Aorta (tissue), 5 donors: ENCODE measurements at regions of chr12 and their contacts with region 1.

Region 1: GRCh38 chr12:116599285-116600136 is 40.3 kb downstream of the MAP1LC3B2 start:
- DNase-seq: peak; percentile 87 to 96
- ATAC-seq: peak; percentile 90
- H3K4me3 ChIP-seq: peak overlapping the region in 1 of 2 donors; percentile 3
- H3K27ac ChIP-seq: peak overlapping the region in 1 of 2 donors; percentile 15
- H3K4me1 ChIP-seq: peaks cover 0 to 2% of the 10 kb centered on the region in 2 donors
- H3K27me3 ChIP-seq: no peaks in the 10 kb centered on the region

Region 2: DNA sequence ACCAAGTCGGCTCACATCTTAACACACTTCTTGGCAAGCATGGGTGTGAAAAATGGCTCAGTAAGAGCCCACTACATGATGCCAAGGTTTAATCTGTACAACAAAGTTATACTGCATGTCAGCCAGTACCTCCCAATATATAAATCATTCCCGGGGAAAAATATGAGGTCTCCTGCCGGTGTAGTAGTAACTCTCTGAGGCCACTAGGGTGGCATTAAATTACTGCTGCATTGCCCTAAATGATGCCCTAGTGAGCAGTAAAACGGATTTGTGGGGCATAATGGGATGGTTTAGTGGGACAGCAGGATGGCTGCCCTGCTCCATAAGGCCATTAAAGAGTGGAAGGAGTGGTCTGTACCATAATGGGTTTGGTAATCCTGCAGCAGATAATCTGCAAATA is 589.7 kb before region 1 on chr12:
- intact Hi-C with region 1: loop called (anchors 5 kb)
- DNase-seq: no peak
- ATAC-seq: no peak
- H3K4me3 ChIP-seq: no peak overlapping the region
- H3K27ac ChIP-seq: no peak overlapping the region
- H3K4me1 ChIP-seq: no peaks in the 10 kb centered on the region
- H3K27me3 ChIP-seq: no peaks in the 10 kb centered on the region

Region 3: GRCh38 chr12:116142936-116143898 is 456.3 kb before region 1 on chr12:
- intact Hi-C with region 1: loop called in 1 of 2 experiments (anchors 10 kb)
- DNase-seq: no peak
- ATAC-seq: no peak
- H3K4me3 ChIP-seq: no peak overlapping the region
- H3K27ac ChIP-seq: peak overlapping the region; percentile 44 to 67
- H3K4me1 ChIP-seq: peaks cover 2 to 6% of the 10 kb centered on the region in 2 donors
- H3K27me3 ChIP-seq: no peaks in the 10 kb centered on the region

Region 4: GRCh38 chr12:116426391-116427136 is 172.9 kb before region 1 on chr12:
- intact Hi-C with region 1: loop called in 1 of 2 experiments (anchors 5 kb)
- DNase-seq: peak; percentile 86 to 91
- ATAC-seq: peak; percentile 91
- H3K4me3 ChIP-seq: no peak overlapping the region
- H3K27ac ChIP-seq: peak overlapping the region in 1 of 2 donors; percentile 56
- H3K4me1 ChIP-seq: no peaks in the 10 kb centered on the region
- H3K27me3 ChIP-seq: no peaks in the 10 kb centered on the region

Region 5: GRCh38 chr12:116533343-116534251 is 65.9 kb before region 1 on chr12:
- intact Hi-C with region 1: loop called (anchors 5 kb)
- DNase-seq: peak; percentile 84 to 93
- ATAC-seq: peak; percentile 85
- H3K4me3 ChIP-seq: peak overlapping the region; percentile 38 to 90
- H3K27ac ChIP-seq: peak overlapping the region in 1 of 2 donors; percentile 37
- H3K4me1 ChIP-seq: peaks cover 1 to 5% of the 10 kb centered on the region in 2 donors
- H3K27me3 ChIP-seq: no peaks in the 10 kb centered on the region